ENCODE measurements at regions of chr9 and their contacts with region 1.

Region 1: DNA sequence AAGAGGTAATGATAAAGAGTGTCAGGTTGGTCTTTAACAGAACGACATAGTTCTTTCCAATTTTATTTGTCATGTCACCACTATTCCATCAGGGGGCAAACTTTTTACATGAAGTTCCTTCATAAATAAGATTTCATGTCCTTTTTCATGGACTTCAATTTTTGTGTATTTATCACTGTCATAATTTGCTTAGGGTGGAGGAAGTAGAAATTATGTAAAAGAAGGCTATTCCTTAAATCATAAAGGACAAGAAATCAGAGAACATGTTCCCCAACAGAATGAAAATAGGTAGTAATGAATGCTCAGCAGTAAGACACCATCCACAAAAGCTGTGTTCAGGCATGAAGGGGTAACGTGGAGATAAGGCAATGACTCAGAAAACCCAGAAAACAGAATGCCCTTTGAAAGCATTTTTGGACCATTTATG is 72.7 kb downstream of the ZFAND5 start:
- DNase-seq: no peak
- H3K4me3 ChIP-seq: no peak overlapping the region
- H3K27ac ChIP-seq: no peak overlapping the region
- H3K4me1 ChIP-seq: no peaks in the 10 kb centered on the region
- H3K27me3 ChIP-seq: no peaks in the 10 kb centered on the region
- CTCF ChIP-seq: peak in 2 of 3 experiments; percentile 19 to 37; a peak in 2 of 4 replicates
- EP300 ChIP-seq: no peak
- POLR2A ChIP-seq: no peak
- RAD21 ChIP-seq: peak in 1 of 2 experiments; percentile 28; a peak in 2 of 4 replicates

Region 2: DNA sequence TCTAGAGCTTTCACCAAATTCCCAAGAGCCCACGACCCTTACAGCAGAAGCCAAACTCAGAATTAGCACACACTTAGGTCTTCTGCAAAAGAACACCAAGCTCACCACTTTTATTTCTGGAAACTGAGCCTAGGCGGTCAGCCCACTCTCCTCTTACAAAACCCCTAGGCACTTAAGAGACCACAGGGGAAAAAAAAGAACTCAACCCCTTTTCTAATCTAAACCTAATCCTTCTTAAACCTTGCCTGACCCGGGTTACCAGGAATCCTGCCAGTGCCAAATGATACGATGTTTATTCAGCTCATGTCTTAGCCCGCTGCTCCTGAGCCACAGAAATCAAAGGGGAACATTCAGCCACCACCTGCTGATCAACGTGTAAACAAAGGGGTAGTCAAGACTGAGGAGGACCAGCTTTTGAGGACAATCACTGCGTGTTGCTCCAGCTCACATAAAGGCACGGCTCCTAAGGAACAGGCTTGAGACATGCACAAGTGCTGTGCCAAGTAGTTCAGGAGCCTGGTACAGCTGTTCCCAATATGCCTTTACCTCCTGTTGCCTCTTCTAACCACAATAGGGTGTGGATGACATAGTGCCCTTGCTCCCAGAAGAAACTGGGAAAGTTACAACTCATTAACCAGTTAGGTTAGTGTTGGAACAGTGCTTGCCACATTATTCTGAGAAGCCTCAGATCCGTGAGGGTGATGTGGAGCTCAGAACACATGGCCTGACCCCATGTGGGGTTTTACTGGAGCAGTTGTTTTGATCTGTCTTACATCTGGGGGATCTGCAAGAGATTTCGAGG is 23.4 kb after region 1 on chr9:
- CTCF ChIA-PET with region 1: interaction called, 11 read pairs
- POLR2A ChIA-PET with region 1: no interaction called
- DNase-seq: no peak
- H3K4me3 ChIP-seq: no peak overlapping the region
- H3K27ac ChIP-seq: no peak overlapping the region
- H3K4me1 ChIP-seq: peaks cover 0 to 8% (median 6%) of the 10 kb centered on the region in 4 experiments; a peak in 5 of 7 replicates
- H3K27me3 ChIP-seq: no peaks in the 10 kb centered on the region
- CTCF ChIP-seq: no peak
- EP300 ChIP-seq: no peak
- POLR2A ChIP-seq: no peak
- RAD21 ChIP-seq: no peak